Esophagus squamous epithelium (tissue), 5 donors: ENCODE measurements at regions of chr11 and their contacts with region 1.

Region 1: GRCh38 chr11:130448416-130449309 is at the start of gene ADAMTS15:
- DNase-seq: no peak
- H3K4me3 ChIP-seq: peak within 1 kb of the TSS; percentile 36 to 74 (median 55)
- H3K27ac ChIP-seq: peak within 1 kb of the TSS; percentile 32 to 85 (median 70)
- H3K4me1 ChIP-seq: peaks cover 11 to 39% (median 15%) of the 10 kb centered on the region in 3 donors
- H3K27me3 ChIP-seq: peaks cover 0 to 45% (median 0%) of the 10 kb centered on the region in 4 donors
- CTCF ChIP-seq: no peak
- POLR2A ChIP-seq: peak in 2 of 4 donors; percentile 50 to 56
- total RNA-seq, gene ADAMTS15: 0.11 to 5.7 (median 2.1) TPM

Region 2: DNA sequence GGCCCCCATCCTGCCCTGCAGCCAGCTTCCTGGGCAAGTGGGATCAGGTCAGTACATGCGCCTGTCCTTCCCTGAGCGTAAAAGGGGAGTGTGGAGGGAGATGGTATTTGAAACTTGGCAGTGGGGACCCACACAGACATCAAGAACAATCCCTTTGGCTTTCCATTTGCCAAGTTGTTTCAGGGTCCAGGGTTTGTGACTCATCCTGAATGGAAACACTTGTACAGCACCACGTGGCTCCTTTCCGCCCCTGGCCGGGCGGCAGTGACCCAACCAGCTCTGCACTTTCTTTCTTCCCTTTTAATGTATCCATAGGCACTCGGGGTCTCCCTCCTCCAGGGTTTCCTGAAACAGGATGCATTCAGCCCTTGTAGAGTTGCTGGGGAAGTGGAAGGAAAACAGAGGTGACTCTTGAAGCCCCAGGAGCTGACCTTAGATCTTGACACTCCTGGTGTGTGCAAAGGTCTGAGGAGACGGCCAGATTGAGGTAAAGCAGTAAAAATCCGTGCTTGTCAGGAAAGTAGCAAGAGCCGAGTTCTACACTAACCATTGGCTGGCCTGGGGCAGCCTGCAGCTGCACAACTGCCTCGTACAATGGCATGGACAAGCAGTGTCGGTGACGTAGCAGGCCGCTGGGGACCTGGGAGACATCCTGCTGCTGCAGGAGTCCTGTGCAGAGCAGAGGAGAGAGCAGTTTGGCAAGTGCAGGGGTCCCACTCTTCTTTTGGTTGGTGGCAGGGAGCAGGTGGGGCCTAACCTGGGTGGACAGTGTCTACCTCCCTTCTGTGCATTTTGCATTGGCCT is 277.8 kb after region 1 on chr11:
- intact Hi-C with region 1: no loop called
- DNase-seq: no peak
- H3K4me3 ChIP-seq: no peak overlapping the region
- H3K27ac ChIP-seq: peak overlapping the region in 2 of 4 donors; percentile 19 to 35
- H3K4me1 ChIP-seq: peaks cover 6 to 22% (median 19%) of the 10 kb centered on the region in 3 donors
- H3K27me3 ChIP-seq: no peaks in the 10 kb centered on the region
- CTCF ChIP-seq: no peak
- POLR2A ChIP-seq: no peak

Region 3: GRCh38 chr11:130817330-130817944 is 368.8 kb after region 1 on chr11:
- intact Hi-C with region 1: no loop called
- DNase-seq: no peak
- H3K4me3 ChIP-seq: no peak overlapping the region
- H3K27ac ChIP-seq: peak overlapping the region in 1 of 4 donors; percentile 5
- H3K4me1 ChIP-seq: no peaks in the 10 kb centered on the region
- H3K27me3 ChIP-seq: peaks cover 0 to 11% (median 0%) of the 10 kb centered on the region in 4 donors
- CTCF ChIP-seq: no peak
- POLR2A ChIP-seq: no peak

Region 4: DNA sequence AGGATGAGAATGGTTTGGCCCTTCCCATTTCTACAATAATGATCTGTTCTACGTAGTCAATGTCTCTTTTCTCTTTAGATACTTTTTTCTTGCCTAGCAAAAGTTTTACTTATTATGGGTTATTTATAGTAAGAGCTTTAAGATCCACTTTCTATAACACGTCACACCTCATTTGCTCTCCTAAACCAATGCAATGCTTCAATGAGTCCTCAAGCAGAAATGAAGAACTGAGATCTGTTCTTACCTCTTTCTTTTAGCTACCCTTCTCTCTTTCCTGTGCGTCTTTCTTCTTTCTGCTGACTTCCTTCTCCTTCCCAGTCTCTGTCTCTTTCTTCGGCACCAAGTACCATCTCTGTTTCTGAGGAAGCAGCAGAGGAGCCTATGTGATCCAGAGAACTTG is 405.8 kb after region 1 on chr11:
- intact Hi-C with region 1: loop called (anchors 5 kb)
- DNase-seq: no peak
- H3K4me3 ChIP-seq: no peak overlapping the region
- H3K27ac ChIP-seq: no peak overlapping the region
- H3K4me1 ChIP-seq: peaks cover 0 to 8% (median 0%) of the 10 kb centered on the region in 3 donors
- H3K27me3 ChIP-seq: no peaks in the 10 kb centered on the region
- CTCF ChIP-seq: no peak
- POLR2A ChIP-seq: no peak